Naive thymus-derived CD8-positive, alpha-beta T cell (primary cell): ENCODE measurements at regions of chr11 and their contacts with region 1.

Region 1: DNA sequence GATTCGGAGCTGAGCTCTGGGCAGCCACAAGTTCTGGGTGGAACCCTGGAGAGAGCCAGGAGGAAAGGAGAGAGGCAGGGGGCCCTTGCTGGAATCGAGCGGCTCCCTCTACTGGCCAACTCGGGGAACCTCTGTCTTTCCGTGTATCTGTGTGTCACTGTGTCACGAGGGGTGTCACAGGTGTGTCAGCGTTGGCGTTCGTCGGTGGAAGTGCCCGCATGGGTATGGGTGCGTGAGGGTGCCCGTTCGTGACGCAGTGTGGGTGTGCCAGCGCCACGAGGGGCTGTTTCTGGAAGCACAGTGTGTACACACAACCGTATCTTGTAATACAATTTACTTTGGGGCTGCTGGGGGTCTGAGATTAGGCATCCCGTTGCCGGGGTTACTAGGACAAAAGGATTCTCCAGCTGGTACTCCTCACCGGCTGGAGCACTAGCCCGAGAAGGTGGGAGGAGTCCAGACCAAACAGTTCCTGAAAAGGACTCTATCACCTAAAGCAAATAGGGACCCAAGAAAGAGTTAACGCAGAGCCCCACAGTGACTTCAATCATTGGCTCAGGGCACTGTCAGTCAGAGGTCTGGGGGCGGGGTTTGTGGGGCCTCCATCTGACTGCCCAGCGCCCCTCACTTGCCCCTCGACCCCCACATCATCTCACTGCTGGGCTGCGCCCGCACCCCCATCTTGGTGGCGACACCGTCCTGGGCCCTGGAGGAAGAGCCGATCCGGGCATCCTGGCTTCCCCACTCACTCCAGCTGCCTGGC is 2.6 kb upstream of the BCL9L start:
- DNase-seq: peak; percentile 85 to 99 (median 98)
- ATAC-seq: peak; percentile 56 to 70
- H3K4me3 Mint-ChIP-seq: peak overlapping the region; percentile 93 to 99 (median 96)
- H3K27ac Mint-ChIP-seq: peak overlapping the region; percentile 96 to 100 (median 100)
- H3K4me1 Mint-ChIP-seq: peaks cover 37 to 61% (median 51%) of the 10 kb centered on the region in 4 donors
- H3K27me3 Mint-ChIP-seq: peaks cover 0 to 2% (median 0%) of the 10 kb centered on the region in 5 donors

Region 2: GRCh38 chr11:118699506-118700220 is 228.6 kb before region 1 on chr11:
- POLR2A ChIA-PET with region 1: interaction called, 11 read pairs
- DNase-seq: peak; percentile 36 to 93 (median 82)
- ATAC-seq: peak; percentile 97 to 98
- H3K4me3 Mint-ChIP-seq: peak overlapping the region; percentile 62 to 89 (median 76)
- H3K27ac Mint-ChIP-seq: peak overlapping the region; percentile 92 to 100 (median 98)
- H3K4me1 Mint-ChIP-seq: peaks cover 11 to 80% (median 72%) of the 10 kb centered on the region in 4 donors
- H3K27me3 Mint-ChIP-seq: no peaks in the 10 kb centered on the region

Region 3: GRCh38 chr11:118878163-118878563 is 50.1 kb before region 1 on chr11:
- POLR2A ChIA-PET with region 1: interaction called, 52 read pairs
- DNase-seq: peak in 4 of 10 donors; percentile 30 to 67 (median 56)
- ATAC-seq: peak; percentile 11 to 24
- H3K4me3 Mint-ChIP-seq: peak overlapping the region; percentile 25 to 85 (median 64)
- H3K27ac Mint-ChIP-seq: peak overlapping the region; percentile 97 to 100 (median 100)
- H3K4me1 Mint-ChIP-seq: peaks cover 47 to 93% (median 91%) of the 10 kb centered on the region in 4 donors
- H3K27me3 Mint-ChIP-seq: no peaks in the 10 kb centered on the region

Region 4: DNA sequence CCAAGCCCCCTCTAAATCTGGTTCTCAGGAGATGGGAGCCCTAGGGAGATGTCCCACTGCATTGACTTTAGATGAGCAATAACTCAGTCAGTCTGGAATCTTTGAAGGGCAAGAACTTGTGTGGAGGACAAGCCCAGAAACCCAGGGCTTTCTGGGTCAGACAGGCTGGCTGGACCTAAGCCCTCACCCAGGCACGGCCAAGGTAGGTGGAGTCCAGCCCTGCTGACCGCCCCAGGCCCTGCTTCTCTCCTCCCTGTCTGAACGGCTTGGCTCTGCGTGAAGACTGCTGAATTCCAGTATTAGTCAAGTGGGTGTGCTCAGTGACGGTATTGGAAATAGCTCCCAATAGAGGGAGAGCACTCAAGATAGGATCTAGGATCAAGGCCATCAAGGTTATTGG is 38.5 kb before region 1 on chr11:
- POLR2A ChIA-PET with region 1: no interaction called
- DNase-seq: peak in 1 of 10 donors; percentile 47
- ATAC-seq: no peak
- H3K4me3 Mint-ChIP-seq: peak overlapping the region in 5 of 10 donors; percentile 3 to 51 (median 30)
- H3K27ac Mint-ChIP-seq: peak overlapping the region in 9 of 10 donors; percentile 65 to 99 (median 89)
- H3K4me1 Mint-ChIP-seq: peaks cover 50 to 91% (median 90%) of the 10 kb centered on the region in 4 donors
- H3K27me3 Mint-ChIP-seq: no peaks in the 10 kb centered on the region

Region 5: DNA sequence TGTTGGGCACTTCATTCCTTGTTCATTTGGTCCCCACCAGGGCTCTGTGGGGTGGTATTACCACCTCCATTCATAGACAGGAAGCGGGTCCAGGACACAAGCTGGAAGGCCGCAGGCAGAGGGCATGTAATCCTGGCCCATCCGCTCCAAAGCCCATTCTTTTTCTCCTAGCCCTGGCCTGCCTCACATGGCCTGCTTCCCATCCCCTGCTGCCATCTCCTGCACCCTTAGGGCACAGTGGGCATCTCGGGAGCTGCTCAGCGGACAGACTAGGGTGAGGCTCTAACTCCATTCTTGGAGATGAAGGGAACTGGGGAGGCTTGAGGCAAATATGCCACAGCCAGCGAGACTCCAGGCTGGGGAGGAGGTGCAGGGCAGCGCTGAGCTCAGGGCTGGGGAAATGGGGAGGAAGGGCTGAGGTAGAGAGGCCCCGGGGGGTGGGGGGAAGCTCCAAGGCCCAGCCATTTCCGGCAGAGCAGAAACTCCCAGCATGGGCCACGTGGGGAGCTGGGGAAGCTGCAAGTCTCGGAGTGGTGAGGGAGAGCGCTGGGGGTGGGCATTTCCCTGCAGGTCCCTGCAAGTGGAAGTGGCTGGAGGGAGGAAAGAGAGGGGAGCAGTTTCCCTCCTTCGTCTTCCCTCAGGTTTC is 11.8 kb after region 1 on chr11:
- POLR2A ChIA-PET with region 1: interaction called, 50 read pairs
- DNase-seq: peak in 9 of 10 donors; percentile 29 to 69 (median 49)
- ATAC-seq: peak; percentile 92 to 95
- H3K4me3 Mint-ChIP-seq: peak overlapping the region in 9 of 10 donors; percentile 25 to 79 (median 64)
- H3K27ac Mint-ChIP-seq: peak overlapping the region in 6 of 10 donors; percentile 40 to 86 (median 77)
- H3K4me1 Mint-ChIP-seq: peaks cover 27 to 52% (median 47%) of the 10 kb centered on the region in 4 donors
- H3K27me3 Mint-ChIP-seq: no peaks in the 10 kb centered on the region

Region 6: DNA sequence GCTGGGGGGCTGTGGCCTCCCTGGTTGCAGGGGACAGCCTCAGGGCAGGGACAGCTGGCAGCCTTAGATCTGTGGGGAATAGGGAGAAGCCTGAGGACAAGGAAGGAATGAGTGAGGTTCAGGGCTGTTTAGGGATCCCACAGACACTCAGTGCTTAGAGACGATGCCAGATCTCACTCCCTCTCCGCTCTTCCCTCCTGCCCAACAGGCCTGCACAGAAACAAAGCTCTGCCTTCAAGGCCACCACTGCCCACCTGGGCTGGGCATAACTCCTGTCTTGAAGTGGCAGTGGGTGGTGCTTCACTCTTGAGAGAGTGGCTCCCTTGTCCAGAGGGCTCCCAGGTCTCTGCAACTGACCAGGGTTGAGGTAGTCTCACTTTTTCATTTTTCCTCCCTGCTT is 56.5 kb after region 1 on chr11:
- POLR2A ChIA-PET with region 1: no interaction called
- DNase-seq: no peak
- ATAC-seq: no peak
- H3K4me3 Mint-ChIP-seq: no peak overlapping the region
- H3K27ac Mint-ChIP-seq: peak overlapping the region in 1 of 10 donors; percentile 50
- H3K4me1 Mint-ChIP-seq: peaks cover 0 to 2% (median 1%) of the 10 kb centered on the region in 4 donors
- H3K27me3 Mint-ChIP-seq: no peaks in the 10 kb centered on the region

Region 7: GRCh38 chr11:118997627-118998387 is 69.5 kb after region 1 on chr11 and contains the start of gene CENATAC:
- POLR2A ChIA-PET with region 1: interaction called, 10 read pairs
- DNase-seq: peak; percentile 90 to 96 (median 94)
- ATAC-seq: peak; percentile 93
- H3K4me3 Mint-ChIP-seq: peak within 1 kb of the TSS; percentile 88 to 99 (median 98)
- H3K27ac Mint-ChIP-seq: peak within 1 kb of the TSS; percentile 89 to 99 (median 97)
- H3K4me1 Mint-ChIP-seq: peaks cover 13 to 48% (median 45%) of the 10 kb centered on the region in 4 donors
- H3K27me3 Mint-ChIP-seq: no peaks in the 10 kb centered on the region
- polyA plus RNA-seq, gene CENATAC: 6.1 to 9.1 (median 8.7) TPM